ENCODE measurements at regions of chr11 and their contacts with region 1.

Region 1: GRCh38 chr11:61899146-61899841 is 7.9 kb upstream of the FADS3 start:
- DNase-seq: peak; percentile 63
- H3K4me3 ChIP-seq: no peak overlapping the region
- H3K27ac ChIP-seq: no peak overlapping the region
- H3K4me1 ChIP-seq: no peaks in the 10 kb centered on the region
- H3K27me3 ChIP-seq: no peaks in the 10 kb centered on the region
- CTCF ChIP-seq: peak; percentile 97 to 100 (median 100)
- POLR2A ChIP-seq: no peak

Region 2: DNA sequence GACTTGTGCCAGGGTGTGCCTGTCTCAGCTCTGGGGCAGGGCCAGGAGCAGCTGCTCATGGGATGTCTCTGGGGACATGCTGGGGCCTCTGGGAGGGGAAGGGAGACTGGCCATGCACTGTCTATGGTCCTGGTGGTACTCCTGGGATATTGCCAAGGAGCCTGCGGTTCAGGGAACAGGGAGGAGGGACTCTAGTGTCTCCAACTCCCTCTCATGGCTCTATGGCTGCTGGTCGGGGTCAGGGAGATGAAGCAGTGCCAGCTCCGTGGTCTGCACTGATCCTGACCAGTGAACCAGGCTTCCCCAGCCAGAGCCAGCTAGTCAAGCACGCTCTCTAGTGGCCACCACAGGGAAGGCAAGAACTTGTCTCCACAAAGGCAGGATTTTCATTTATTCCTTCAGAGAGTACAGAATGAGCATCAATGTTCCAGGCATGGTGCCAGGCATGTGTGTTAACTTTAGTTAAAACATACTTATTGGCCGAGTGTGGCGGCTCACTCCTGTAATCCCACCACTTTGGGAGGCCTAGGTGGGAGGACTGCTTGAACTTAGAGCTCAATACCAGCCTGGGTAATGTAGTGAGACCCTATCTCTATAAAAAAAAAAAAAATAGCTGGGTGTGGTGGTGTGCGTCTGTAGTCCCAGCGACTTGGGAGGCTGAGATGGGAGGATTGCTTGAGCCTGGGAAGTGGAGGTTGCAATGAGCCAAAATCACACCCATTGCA is 48.4 kb after region 1 on chr11:
- intact Hi-C with region 1: loop called (anchors 2 kb)
- DNase-seq: peak; percentile 82
- H3K4me3 ChIP-seq: no peak overlapping the region
- H3K27ac ChIP-seq: no peak overlapping the region
- H3K4me1 ChIP-seq: no peaks in the 10 kb centered on the region
- H3K27me3 ChIP-seq: no peaks in the 10 kb centered on the region
- CTCF ChIP-seq: peak; percentile 69 to 91 (median 83)
- POLR2A ChIP-seq: no peak

Region 3: DNA sequence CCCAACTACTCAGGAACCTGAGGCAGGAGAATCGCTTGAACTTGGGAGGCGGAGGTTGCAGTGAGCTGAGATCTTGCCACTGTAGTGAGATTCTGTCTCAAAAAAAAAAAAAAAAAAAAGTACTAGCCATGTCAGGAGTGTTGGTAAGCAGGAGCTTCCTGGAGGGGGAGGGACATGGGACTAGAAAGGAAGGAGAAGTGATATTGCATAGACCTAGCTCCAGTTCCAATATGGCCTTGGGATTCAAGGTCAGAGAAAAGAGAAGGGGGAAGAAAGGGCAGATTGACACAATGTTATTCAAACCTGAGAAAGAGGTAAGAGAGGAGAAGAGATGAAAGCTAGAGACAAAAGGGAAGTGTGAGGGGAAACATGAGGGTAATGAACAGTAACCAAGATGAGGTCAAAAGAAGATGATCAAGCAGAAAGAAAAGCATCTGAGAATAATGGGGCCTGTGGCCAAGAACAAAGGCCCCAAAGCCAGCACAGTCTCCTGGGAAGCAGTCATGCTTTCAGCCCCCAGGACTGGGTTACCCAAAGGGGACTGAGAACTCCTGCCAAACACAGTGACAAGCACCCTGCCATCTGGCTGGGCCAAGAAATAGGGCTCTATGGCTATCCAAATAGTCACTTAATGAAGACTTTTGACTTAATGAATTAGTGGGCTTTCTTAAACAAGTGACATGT is 119.8 kb after region 1 on chr11:
- intact Hi-C with region 1: no loop called
- DNase-seq: no peak
- H3K4me3 ChIP-seq: no peak overlapping the region
- H3K27ac ChIP-seq: no peak overlapping the region
- H3K4me1 ChIP-seq: no peaks in the 10 kb centered on the region
- H3K27me3 ChIP-seq: no peaks in the 10 kb centered on the region
- CTCF ChIP-seq: no peak
- POLR2A ChIP-seq: no peak

Region 4: GRCh38 chr11:62081378-62082291 is 182.3 kb after region 1 on chr11:
- intact Hi-C with region 1: loop called (anchors 1 kb)
- DNase-seq: peak; percentile 69
- H3K4me3 ChIP-seq: no peak overlapping the region
- H3K27ac ChIP-seq: no peak overlapping the region
- H3K4me1 ChIP-seq: no peaks in the 10 kb centered on the region
- H3K27me3 ChIP-seq: no peaks in the 10 kb centered on the region
- CTCF ChIP-seq: peak; percentile 78 to 92 (median 92)
- POLR2A ChIP-seq: no peak

Region 5: GRCh38 chr11:62108017-62108750 is 208.9 kb after region 1 on chr11:
- intact Hi-C with region 1: loop called (anchors 5 kb)
- DNase-seq: peak; percentile 49
- H3K4me3 ChIP-seq: no peak overlapping the region
- H3K27ac ChIP-seq: no peak overlapping the region
- H3K4me1 ChIP-seq: no peaks in the 10 kb centered on the region
- H3K27me3 ChIP-seq: no peaks in the 10 kb centered on the region
- CTCF ChIP-seq: peak; percentile 77 to 86 (median 82)
- POLR2A ChIP-seq: no peak

Measured in prostate gland (tissue), 2 donors.